A549 (cell line): ENCODE measurements at regions of chr16 and their contacts with region 1.

Region 1: DNA sequence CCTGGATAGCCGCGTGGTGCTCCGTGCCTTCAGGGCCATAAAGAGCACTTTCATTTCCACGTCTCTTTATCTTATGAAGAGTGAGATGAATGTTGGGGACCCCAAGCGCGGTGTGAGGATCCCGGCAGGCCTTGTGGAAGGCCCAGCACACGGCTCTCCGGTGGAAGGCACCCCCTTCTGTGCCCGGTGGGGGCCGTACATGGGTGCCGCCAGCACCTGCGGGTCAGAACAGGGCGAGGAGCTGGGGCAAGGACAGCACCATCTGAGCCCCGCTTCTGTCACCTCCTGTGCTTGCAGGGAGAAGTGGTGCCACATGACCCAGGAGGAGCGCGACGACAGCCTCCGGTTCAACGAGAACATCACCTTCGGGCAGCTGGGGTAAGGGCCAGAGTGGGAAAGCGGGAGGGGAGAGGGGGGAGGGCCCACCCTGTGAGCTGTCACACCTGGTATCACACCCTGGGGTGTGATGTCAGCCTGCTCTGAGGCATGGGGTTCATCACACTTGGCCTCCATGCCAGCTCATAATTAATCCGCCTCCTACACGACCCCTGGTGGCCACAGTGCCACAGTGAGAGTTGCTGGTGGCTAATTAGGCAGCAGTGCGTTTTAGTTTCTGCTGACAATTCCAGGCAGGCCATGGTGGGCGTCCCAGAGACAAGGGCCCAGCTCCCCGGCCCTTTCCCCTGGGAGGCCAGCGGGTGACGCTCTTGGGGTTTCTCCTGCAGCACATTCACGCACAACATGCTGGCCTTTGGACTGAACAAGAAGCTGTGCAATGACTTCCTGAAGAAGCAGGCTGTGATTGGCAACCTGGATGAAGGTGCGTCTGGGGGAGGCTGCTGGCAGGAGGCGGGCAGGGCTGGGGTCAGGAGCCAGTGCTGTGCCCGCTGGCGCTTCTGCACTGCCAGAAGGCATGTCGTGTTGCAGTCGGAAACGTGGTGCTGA is 25.7 kb downstream of the CIBAR2 start:
- DNase-seq: peak; percentile 70 to 95
- ATAC-seq: peak; percentile 75 to 91
- H3K4me3 ChIP-seq: no peak overlapping the region
- H3K27ac ChIP-seq: peak overlapping the region; percentile 41 to 71; a peak in 4 of 6 replicates
- H3K4me1 ChIP-seq: peaks cover 4% of the 10 kb centered on the region; the same call in 2 of the 3 replicates
- CTCF ChIP-seq: peak; percentile 74
- EP300 ChIP-seq: no peak
- POLR2A ChIP-seq: no peak
- RAD21 ChIP-seq: peak; percentile 76 to 80

Region 2: GRCh38 chr16:84647828-84648594 is 438.6 kb before region 1 on chr16 and contains the start of gene KLHL36:
- CTCF ChIA-PET with region 1: no interaction called
- POLR2A ChIA-PET with region 1: no interaction called
- DNase-seq: peak; percentile 46 to 82
- ATAC-seq: peak; percentile 82 to 91
- H3K4me3 ChIP-seq: peak within 1 kb of the TSS; percentile 92
- H3K27ac ChIP-seq: peak within 1 kb of the TSS; percentile 90 to 99
- H3K4me1 ChIP-seq: peaks cover 23% of the 10 kb centered on the region; the same call in 2 of the 3 replicates
- CTCF ChIP-seq: no peak
- EP300 ChIP-seq: no peak
- POLR2A ChIP-seq: no peak; the same call in 1 of the 2 replicates
- RAD21 ChIP-seq: no peak
- polyA plus RNA-seq, gene KLHL36: 21.0 and 22.3 TPM in 2 replicates

Region 3: DNA sequence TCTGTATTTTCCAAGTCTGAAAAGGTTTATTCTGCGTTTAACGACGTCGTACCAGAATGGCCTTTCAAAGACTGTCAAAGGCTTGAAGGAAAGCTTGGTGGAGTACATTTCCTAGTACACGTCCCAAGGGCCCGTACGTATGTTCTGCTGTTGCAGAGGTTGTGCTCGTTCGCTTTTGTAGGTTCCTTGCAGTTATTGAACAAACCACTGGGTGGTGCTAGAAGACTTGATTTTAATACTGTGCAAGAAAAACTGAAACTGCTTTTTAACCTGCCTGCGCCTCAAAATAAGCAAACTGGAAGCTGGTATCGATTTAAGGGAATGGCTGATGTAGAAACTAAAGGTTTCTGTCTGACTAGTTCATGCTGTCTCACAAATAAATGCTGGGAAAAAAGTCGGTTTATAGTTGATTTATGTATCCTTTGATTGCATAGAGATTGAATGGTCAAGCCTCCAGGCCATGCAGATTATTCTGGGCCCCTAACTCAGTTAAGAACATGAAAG is 332.2 kb before region 1 on chr16:
- CTCF ChIA-PET with region 1: interaction called, 21 read pairs
- POLR2A ChIA-PET with region 1: no interaction called
- DNase-seq: peak; percentile 78 to 86
- ATAC-seq: peak; percentile 88 to 90
- H3K4me3 ChIP-seq: no peak overlapping the region
- H3K27ac ChIP-seq: no peak overlapping the region
- H3K4me1 ChIP-seq: peaks cover 25% of the 10 kb centered on the region
- CTCF ChIP-seq: peak; percentile 89
- EP300 ChIP-seq: no peak
- POLR2A ChIP-seq: no peak
- RAD21 ChIP-seq: peak; percentile 79 to 86

Region 4: DNA sequence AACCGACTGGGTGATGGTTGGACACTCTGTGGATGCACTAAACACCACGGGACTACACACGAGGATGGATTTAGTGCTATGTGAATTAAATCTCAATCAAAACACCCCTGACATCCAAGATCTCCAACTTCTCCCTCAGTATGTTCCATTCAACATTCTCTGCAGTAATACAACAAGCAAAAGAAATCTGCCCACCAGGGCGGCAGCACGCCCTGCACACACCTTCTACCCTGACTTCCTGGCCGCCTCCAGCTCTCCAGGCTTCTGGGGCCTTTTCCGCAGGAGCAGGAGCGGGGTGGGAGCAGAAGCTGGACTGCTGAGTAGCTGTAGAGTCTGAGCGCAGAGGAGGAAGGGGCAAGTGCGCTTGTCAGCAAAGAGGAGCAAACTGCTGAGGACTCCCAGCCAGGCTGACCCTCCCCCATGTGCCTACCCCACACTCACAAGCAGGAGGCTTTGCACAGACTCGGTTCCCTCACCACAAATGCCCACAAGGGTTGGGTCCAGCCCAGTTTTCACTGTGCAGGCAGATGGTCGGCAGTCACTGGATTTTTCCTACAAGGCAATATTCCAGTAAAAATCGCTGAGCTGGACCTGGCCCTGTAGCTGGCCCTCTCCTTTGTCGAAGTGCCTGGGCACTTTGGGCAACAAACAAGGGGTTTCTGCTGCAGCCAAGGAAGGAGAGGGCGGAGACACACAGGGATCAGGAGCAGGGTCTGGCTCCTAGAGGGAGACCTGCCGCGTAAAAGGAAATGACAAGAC is 98.1 kb before region 1 on chr16:
- CTCF ChIA-PET with region 1: interaction called, 16 read pairs
- POLR2A ChIA-PET with region 1: no interaction called
- DNase-seq: no peak
- ATAC-seq: peak; percentile 25 to 51; a peak in 3 of 6 replicates
- H3K4me3 ChIP-seq: no peak overlapping the region
- H3K27ac ChIP-seq: peak overlapping the region in 1 of 2 experiments; percentile 29; a peak in 2 of 6 replicates
- H3K4me1 ChIP-seq: peaks cover 29% of the 10 kb centered on the region
- CTCF ChIP-seq: no peak
- EP300 ChIP-seq: no peak
- POLR2A ChIP-seq: no peak
- RAD21 ChIP-seq: no peak

Region 5: DNA sequence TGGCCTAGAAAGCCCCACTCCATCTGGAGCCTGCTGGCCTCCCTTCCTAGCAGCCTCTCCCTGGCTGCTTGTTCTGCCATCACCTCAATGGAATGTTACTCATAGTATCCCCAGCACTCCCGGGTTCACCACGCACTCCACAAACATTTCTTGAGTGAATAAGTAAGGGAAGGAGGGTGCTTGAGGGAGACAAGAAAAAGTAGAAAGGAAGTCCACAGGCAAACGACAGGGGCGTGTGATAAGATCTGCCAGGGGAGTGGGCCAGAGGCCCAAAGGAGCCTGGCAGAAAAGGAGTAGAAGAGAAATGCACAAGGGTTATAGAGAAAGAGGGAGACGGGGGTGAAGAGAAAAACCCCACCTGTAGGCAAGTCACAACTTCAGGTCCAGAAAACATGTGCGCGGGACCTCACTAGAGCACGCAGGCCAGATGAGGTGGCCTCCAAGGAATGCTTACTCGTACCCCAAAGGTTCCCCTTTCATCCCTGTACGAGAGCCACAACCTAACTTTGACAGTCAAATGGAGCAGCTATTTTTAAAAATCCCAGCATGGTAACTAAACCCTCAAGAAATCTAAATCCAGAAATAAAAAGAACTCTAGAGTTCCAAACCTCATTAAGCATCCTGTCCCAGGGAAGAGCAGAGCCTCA is 81.9 kb before region 1 on chr16:
- CTCF ChIA-PET with region 1: interaction called, 21 read pairs
- POLR2A ChIA-PET with region 1: no interaction called
- DNase-seq: peak; percentile 71 to 77
- ATAC-seq: peak; percentile 78 to 82
- H3K4me3 ChIP-seq: peak overlapping the region; percentile 9; the same call in 1 of the 3 replicates
- H3K27ac ChIP-seq: peak overlapping the region; percentile 79 to 90
- H3K4me1 ChIP-seq: peaks cover 84% of the 10 kb centered on the region
- CTCF ChIP-seq: no peak
- EP300 ChIP-seq: no peak
- POLR2A ChIP-seq: no peak
- RAD21 ChIP-seq: no peak

Region 6: GRCh38 chr16:85027349-85027957 is 59.2 kb before region 1 on chr16 and contains the start of gene KIAA0513:
- CTCF ChIA-PET with region 1: interaction called, 19 read pairs
- POLR2A ChIA-PET with region 1: no interaction called
- DNase-seq: peak; percentile 86 to 92
- ATAC-seq: peak; percentile 91 to 92
- H3K4me3 ChIP-seq: peak within 1 kb of the TSS; percentile 85
- H3K27ac ChIP-seq: peak within 1 kb of the TSS; percentile 75 to 92
- H3K4me1 ChIP-seq: peaks cover 31% of the 10 kb centered on the region
- CTCF ChIP-seq: no peak; the same call in 2 of the 3 replicates
- EP300 ChIP-seq: no peak
- POLR2A ChIP-seq: peak; percentile 80
- RAD21 ChIP-seq: no peak
- polyA plus RNA-seq, gene KIAA0513: 1.5 and 1.8 TPM in 2 replicates

Region 7: GRCh38 chr16:85061566-85061965 is 25.1 kb before region 1 on chr16:
- CTCF ChIA-PET with region 1: interaction called, 14 read pairs
- POLR2A ChIA-PET with region 1: no interaction called
- DNase-seq: no peak
- ATAC-seq: no peak
- H3K4me3 ChIP-seq: no peak overlapping the region
- H3K27ac ChIP-seq: no peak overlapping the region
- H3K4me1 ChIP-seq: no peaks in the 10 kb centered on the region
- CTCF ChIP-seq: no peak
- EP300 ChIP-seq: no peak
- POLR2A ChIP-seq: no peak
- RAD21 ChIP-seq: no peak

Region 8: GRCh38 chr16:85098565-85098964 is 11.9 kb after region 1 on chr16:
- CTCF ChIA-PET with region 1: interaction called, 26 read pairs
- POLR2A ChIA-PET with region 1: no interaction called
- DNase-seq: no peak
- ATAC-seq: no peak
- H3K4me3 ChIP-seq: no peak overlapping the region
- H3K27ac ChIP-seq: no peak overlapping the region
- H3K4me1 ChIP-seq: no peaks in the 10 kb centered on the region
- CTCF ChIP-seq: no peak
- EP300 ChIP-seq: no peak
- POLR2A ChIP-seq: no peak
- RAD21 ChIP-seq: no peak